ENCODE measurements at regions of chr11 and their contacts with region 1.

Region 1: GRCh38 chr11:94504689-94505293 is 7.5 kb upstream of the C11orf97 start:
- DNase-seq: peak in 2 of 35 experiments; percentile 25 to 73
- ATAC-seq: peak; percentile 40 to 54 (median 46)
- H3K4me3 ChIP-seq: no peak overlapping the region
- H3K4me3 Mint-ChIP-seq: no peak overlapping the region
- H3K27ac ChIP-seq: no peak overlapping the region
- H3K27ac Mint-ChIP-seq: no peak overlapping the region
- H3K4me1 ChIP-seq: no peaks in the 10 kb centered on the region
- H3K4me1 Mint-ChIP-seq: peaks cover 0 to 1% (median 0%) of the 10 kb centered on the region in 3 donors
- H3K27me3 ChIP-seq: no peaks in the 10 kb centered on the region
- H3K27me3 Mint-ChIP-seq: peaks cover 2 to 3% of the 10 kb centered on the region in 2 donors

Region 2: DNA sequence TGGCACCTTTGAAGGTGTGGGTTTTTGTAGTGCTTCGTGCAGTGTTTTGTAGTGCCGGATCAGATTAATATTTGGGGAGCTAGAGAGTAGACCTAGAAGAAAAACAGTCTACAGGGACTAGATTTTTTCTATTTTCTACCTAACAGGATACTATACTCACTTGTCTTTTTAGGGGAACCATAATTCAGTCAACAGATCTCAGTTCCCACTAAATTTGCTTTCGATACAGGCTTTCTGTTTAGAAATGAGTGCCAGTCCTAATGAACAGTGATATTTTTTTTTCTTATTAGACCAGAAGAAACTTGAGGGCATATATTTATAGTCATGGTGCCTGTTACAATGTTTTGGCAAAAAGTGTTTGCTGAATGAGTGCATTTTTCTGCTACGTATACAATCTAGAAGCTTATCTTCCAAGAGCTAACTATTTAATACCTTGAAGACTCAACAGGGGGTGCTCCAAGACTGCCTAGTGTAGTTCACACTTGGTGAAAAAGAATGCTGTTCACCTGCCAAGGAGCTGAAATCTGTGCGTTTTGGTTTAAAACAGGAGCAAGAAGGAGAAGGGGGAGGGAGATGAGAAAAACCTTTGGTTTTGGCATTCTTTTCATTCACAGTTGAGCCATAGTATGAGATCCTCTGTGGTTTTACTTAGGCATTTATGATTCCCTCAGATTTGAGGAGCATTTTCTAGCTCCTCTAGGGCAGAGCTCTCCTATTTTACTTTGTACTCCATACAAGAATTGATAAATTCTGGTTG is 609.5 kb before region 1 on chr11:
- CTCF ChIA-PET with region 1: interaction called, 3 to 34 read pairs
- POLR2A ChIA-PET with region 1: no interaction called
- DNase-seq: peak in 7 of 35 experiments; percentile 0 to 53 (median 4)
- ATAC-seq: no peak
- H3K4me3 ChIP-seq: no peak overlapping the region
- H3K4me3 Mint-ChIP-seq: no peak overlapping the region
- H3K27ac ChIP-seq: no peak overlapping the region
- H3K27ac Mint-ChIP-seq: no peak overlapping the region
- H3K4me1 ChIP-seq: no peaks in the 10 kb centered on the region
- H3K4me1 Mint-ChIP-seq: no peaks in the 10 kb centered on the region
- H3K27me3 ChIP-seq: peaks cover 0 to 20% of the 10 kb centered on the region in 2 experiments
- H3K27me3 Mint-ChIP-seq: peaks cover 31 to 45% of the 10 kb centered on the region in 2 donors

Region 3: GRCh38 chr11:94315664-94316063 is 189.1 kb before region 1 on chr11:
- CTCF ChIA-PET with region 1: no interaction called
- POLR2A ChIA-PET with region 1: no interaction called
- DNase-seq: no peak
- ATAC-seq: no peak
- H3K4me3 ChIP-seq: no peak overlapping the region
- H3K4me3 Mint-ChIP-seq: no peak overlapping the region
- H3K27ac ChIP-seq: no peak overlapping the region
- H3K27ac Mint-ChIP-seq: no peak overlapping the region
- H3K4me1 ChIP-seq: no peaks in the 10 kb centered on the region
- H3K4me1 Mint-ChIP-seq: no peaks in the 10 kb centered on the region
- H3K27me3 ChIP-seq: peaks cover 0 to 2% of the 10 kb centered on the region in 2 experiments
- H3K27me3 Mint-ChIP-seq: peaks cover 19 to 26% of the 10 kb centered on the region in 2 donors

Region 4: GRCh38 chr11:94325681-94326080 is 179.1 kb before region 1 on chr11:
- CTCF ChIA-PET with region 1: interaction called, 3 to 10 read pairs
- POLR2A ChIA-PET with region 1: no interaction called
- DNase-seq: peak in 28 of 35 experiments; percentile 1 to 58 (median 24)
- ATAC-seq: no peak
- H3K4me3 ChIP-seq: no peak overlapping the region
- H3K4me3 Mint-ChIP-seq: no peak overlapping the region
- H3K27ac ChIP-seq: no peak overlapping the region
- H3K27ac Mint-ChIP-seq: no peak overlapping the region
- H3K4me1 ChIP-seq: no peaks in the 10 kb centered on the region
- H3K4me1 Mint-ChIP-seq: no peaks in the 10 kb centered on the region
- H3K27me3 ChIP-seq: no peaks in the 10 kb centered on the region
- H3K27me3 Mint-ChIP-seq: peaks cover 2 to 5% of the 10 kb centered on the region in 2 donors

Region 5: DNA sequence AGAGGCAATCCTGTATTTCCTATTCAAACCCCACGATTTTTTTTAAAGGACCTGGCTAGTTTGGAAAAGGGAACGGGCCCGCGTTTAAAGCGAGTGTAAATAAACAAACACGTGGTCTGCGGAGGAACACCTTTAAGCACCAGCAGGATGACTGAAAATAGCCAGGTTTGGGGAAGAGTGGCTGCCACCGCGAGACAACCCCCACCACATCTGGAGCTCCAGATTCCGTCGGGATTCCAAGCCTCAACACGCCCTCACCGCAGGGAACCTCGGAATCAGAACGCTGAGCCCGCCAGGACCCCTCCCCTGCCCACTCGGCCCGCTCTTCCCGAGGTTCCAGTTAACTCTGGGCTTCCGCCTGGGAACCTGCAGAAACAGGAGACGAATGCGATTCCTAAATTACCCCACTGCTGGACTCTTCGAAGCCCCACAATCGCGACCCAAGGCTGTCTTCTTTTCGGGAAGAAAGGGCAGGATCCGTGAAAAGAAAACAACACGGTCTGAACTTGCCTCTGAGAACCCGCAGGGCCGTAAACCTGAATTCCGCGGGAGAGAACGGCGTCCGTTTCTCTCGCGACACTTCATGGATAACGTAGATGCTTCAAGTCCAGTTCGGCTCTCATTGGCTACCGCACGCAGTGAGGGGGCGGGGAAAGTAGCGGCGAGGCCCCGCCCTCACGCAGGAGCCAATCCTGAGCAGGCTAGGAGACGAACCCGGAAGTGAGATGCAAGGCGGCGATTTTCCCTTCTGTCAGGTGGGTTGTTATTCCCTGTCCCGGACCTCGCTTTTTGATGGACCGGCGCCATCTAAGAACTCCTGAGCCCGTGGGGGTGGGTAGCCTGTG is 11.3 kb before region 1 on chr11 and contains the starts of genes ANKRD49 and MRE11:
- CTCF ChIA-PET with region 1: interaction called, 4 to 10 read pairs
- POLR2A ChIA-PET with region 1: interaction called in 1 of 2 experiments, 3 read pairs
- DNase-seq: peak; percentile 90 to 99 (median 96)
- ATAC-seq: peak; percentile 99 to 100 (median 100)
- H3K4me3 ChIP-seq: peak within 1 kb of the TSS; percentile 98
- H3K4me3 Mint-ChIP-seq: peak within 1 kb of the TSS; percentile 92 to 97 (median 96)
- H3K27ac ChIP-seq: peak within 1 kb of the TSS; percentile 91
- H3K27ac Mint-ChIP-seq: peak within 1 kb of the TSS; percentile 94 to 96
- H3K4me1 ChIP-seq: peaks cover 6 to 20% of the 10 kb centered on the region in 2 experiments
- H3K4me1 Mint-ChIP-seq: peaks cover 42 to 64% (median 44%) of the 10 kb centered on the region in 3 donors
- H3K27me3 ChIP-seq: no peaks in the 10 kb centered on the region
- H3K27me3 Mint-ChIP-seq: no peaks in the 10 kb centered on the region
- total RNA-seq, gene ANKRD49: 36.9 to 43.4 (median 39.7) TPM
- total RNA-seq, gene MRE11: 22.1 to 34.0 (median 27.4) TPM

Region 6: DNA sequence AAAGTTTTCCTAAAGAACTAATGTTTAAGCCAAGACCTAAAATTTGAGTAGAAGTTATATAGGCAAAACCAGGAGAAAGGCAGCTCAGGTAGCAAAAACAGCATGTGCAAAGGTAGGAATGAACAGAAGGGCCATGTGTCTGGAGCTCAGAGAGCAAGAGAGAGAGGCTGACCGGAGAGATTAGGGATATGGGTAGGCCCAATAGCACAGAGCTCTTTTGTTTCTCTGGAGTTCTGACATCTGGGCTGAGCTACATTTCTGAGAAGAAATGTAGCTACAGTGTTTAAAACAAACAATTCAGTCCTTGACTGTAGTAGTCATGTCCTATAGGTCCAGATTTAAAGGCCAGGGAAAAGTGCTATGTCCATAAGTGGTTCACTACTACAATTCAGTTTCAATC is 11.9 kb after region 1 on chr11:
- CTCF ChIA-PET with region 1: interaction called, 8 to 11 read pairs
- POLR2A ChIA-PET with region 1: no interaction called
- DNase-seq: no peak
- ATAC-seq: no peak
- H3K4me3 ChIP-seq: no peak overlapping the region
- H3K4me3 Mint-ChIP-seq: no peak overlapping the region
- H3K27ac ChIP-seq: no peak overlapping the region
- H3K27ac Mint-ChIP-seq: no peak overlapping the region
- H3K4me1 ChIP-seq: peaks cover 0 to 11% of the 10 kb centered on the region in 2 experiments
- H3K4me1 Mint-ChIP-seq: peaks cover 13 to 15% (median 14%) of the 10 kb centered on the region in 3 donors
- H3K27me3 ChIP-seq: peaks cover 0 to 6% of the 10 kb centered on the region in 2 experiments
- H3K27me3 Mint-ChIP-seq: peaks cover 13 to 24% of the 10 kb centered on the region in 2 donors

Region 7: GRCh38 chr11:94574193-94574961 is 69.6 kb after region 1 on chr11:
- CTCF ChIA-PET with region 1: no interaction called
- POLR2A ChIA-PET with region 1: no interaction called
- DNase-seq: peak in 1 of 35 experiments; percentile 5
- ATAC-seq: no peak
- H3K4me3 ChIP-seq: no peak overlapping the region
- H3K4me3 Mint-ChIP-seq: no peak overlapping the region
- H3K27ac ChIP-seq: no peak overlapping the region
- H3K27ac Mint-ChIP-seq: no peak overlapping the region
- H3K4me1 ChIP-seq: no peaks in the 10 kb centered on the region
- H3K4me1 Mint-ChIP-seq: no peaks in the 10 kb centered on the region
- H3K27me3 ChIP-seq: no peaks in the 10 kb centered on the region
- H3K27me3 Mint-ChIP-seq: peaks cover 0 to 4% of the 10 kb centered on the region in 2 donors

Measured in T-cell (primary cell).